A673 (cell line): ENCODE measurements at regions of chr1 and their contacts with region 1.

Region 1: GRCh38 chr1:167273027-167273800 is 52.5 kb downstream of the POU2F1 start:
- DNase-seq: peak; percentile 72
- H3K4me3 ChIP-seq: no peak overlapping the region
- H3K27ac ChIP-seq: peak overlapping the region; percentile 40
- H3K4me1 ChIP-seq: peaks cover 61% of the 10 kb centered on the region
- H3K27me3 ChIP-seq: no peaks in the 10 kb centered on the region
- CTCF ChIP-seq: no peak

Region 2: DNA sequence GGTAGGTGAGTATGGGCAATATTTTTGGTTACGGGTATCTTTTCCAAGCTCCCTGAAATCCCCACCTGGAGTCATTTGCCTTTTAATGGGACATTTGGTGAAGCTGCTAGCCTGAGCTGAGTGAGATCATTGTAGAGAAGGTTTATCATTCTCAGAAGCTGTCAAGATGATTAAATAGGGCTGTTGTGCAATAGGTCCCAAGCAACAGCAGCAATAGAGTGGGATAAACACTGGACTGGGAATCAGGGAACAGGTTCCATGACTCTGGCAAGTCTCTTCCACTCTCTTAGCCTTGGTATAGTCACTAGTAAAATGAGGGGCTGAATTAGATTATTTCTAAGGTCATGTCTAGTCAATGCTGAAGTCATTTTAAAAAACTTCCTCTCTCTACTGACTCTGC is 1076.1 kb before region 1 on chr1:
- CTCF ChIA-PET with region 1: no interaction called
- POLR2A ChIA-PET with region 1: no interaction called
- intact Hi-C with region 1: no loop called
- DNase-seq: no peak
- H3K4me3 ChIP-seq: no peak overlapping the region
- H3K27ac ChIP-seq: no peak overlapping the region
- H3K4me1 ChIP-seq: no peaks in the 10 kb centered on the region
- H3K27me3 ChIP-seq: no peaks in the 10 kb centered on the region
- CTCF ChIP-seq: no peak

Region 3: DNA sequence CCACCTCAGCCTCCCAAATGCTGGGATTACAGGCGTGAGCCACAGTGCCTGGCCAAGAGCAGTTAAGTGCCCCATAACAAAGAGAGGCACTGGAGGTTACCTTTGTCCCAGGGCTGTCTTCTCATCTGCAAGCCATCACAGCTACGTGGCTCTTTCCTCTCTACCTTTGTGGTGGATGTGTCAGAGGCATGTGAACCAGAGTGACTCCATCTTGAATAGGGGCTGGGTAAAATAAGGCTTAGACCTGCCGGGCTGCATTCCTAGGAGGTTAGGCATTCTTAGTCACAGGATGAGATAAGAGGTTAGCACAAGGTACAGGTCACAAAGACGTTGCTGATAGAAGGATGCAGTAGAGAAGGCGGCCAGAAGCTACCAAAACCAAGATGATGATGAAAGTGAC is 112.0 kb before region 1 on chr1:
- CTCF ChIA-PET with region 1: no interaction called
- POLR2A ChIA-PET with region 1: no interaction called
- intact Hi-C with region 1: no loop called
- DNase-seq: no peak
- H3K4me3 ChIP-seq: no peak overlapping the region
- H3K27ac ChIP-seq: no peak overlapping the region
- H3K4me1 ChIP-seq: peaks cover 27% of the 10 kb centered on the region
- H3K27me3 ChIP-seq: no peaks in the 10 kb centered on the region
- CTCF ChIP-seq: no peak

Region 4: GRCh38 chr1:167258858-167259257 is 14.4 kb before region 1 on chr1:
- CTCF ChIA-PET with region 1: no interaction called
- POLR2A ChIA-PET with region 1: no interaction called
- intact Hi-C with region 1: no loop called
- DNase-seq: no peak
- H3K4me3 ChIP-seq: no peak overlapping the region
- H3K27ac ChIP-seq: no peak overlapping the region
- H3K4me1 ChIP-seq: peaks cover 21% of the 10 kb centered on the region
- H3K27me3 ChIP-seq: no peaks in the 10 kb centered on the region
- CTCF ChIP-seq: no peak

Region 5: GRCh38 chr1:167342846-167343245 is 69.6 kb after region 1 on chr1:
- CTCF ChIA-PET with region 1: interaction called, 5 read pairs
- POLR2A ChIA-PET with region 1: no interaction called
- intact Hi-C with region 1: loop called (anchors 5 kb)
- DNase-seq: no peak
- H3K4me3 ChIP-seq: no peak overlapping the region
- H3K27ac ChIP-seq: no peak overlapping the region
- H3K4me1 ChIP-seq: no peaks in the 10 kb centered on the region
- H3K27me3 ChIP-seq: no peaks in the 10 kb centered on the region
- CTCF ChIP-seq: peak; percentile 40; the same call in 1 of the 2 replicates